ENCODE measurements at regions of chr13 and their contacts with region 1.

Region 1: DNA sequence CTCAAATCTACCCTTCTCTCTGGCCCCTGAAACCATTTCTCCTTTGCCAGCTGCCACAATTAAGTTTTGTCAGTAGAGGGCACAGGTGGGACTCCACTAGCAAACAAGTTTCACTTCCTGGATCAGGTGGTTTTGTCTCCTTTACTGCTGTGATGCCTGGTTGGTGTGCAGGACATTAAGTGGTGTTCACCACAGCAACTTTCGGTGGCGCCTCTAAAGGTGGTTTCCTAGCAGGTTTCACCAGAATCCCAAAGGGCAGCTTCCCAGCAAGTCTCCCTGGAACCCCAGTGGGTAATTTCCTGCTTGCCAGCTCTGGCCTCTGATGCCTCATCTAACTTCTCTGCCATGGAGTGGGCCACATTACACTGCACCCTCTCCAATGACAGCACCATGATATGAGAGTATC is 16.6 kb downstream of the MED4 start:
- DNase-seq: peak; percentile 11
- H3K4me3 Mint-ChIP-seq: no peak overlapping the region
- H3K27ac Mint-ChIP-seq: no peak overlapping the region
- H3K4me1 Mint-ChIP-seq: peaks cover 15% of the 10 kb centered on the region
- H3K27me3 Mint-ChIP-seq: no peaks in the 10 kb centered on the region

Region 2: GRCh38 chr13:48043789-48044503 is 34.3 kb before region 1 on chr13:
- intact Hi-C with region 1: loop called (anchors 5 kb)
- DNase-seq: no peak
- H3K4me3 Mint-ChIP-seq: peak overlapping the region; percentile 24
- H3K27ac Mint-ChIP-seq: peak overlapping the region; percentile 71
- H3K4me1 Mint-ChIP-seq: peaks cover 37% of the 10 kb centered on the region
- H3K27me3 Mint-ChIP-seq: no peaks in the 10 kb centered on the region

Measured in activated T-helper 1 cell treated with anti-CD3 and anti-CD28 coated beads, Interleukin-12 subunit alpha, Interleukin-12 subunit beta, Interleukin-2, Interleukin-4 antibody, amounts not matched to agents 30 ng/mL and 10 ng/mL and 1 ng/mL, durations not matched to agents 14 hours and 24 hours and 36 hours (primary cell).